Calu3 (cell line): ENCODE measurements at regions of chr11 and their contacts with region 1.

Region 1: GRCh38 chr11:31325160-31325559 is 44.4 kb downstream of the DCDC1 start:
- DNase-seq: no peak
- H3K4me3 Mint-ChIP-seq: no peak overlapping the region
- H3K27ac Mint-ChIP-seq: no peak overlapping the region
- H3K4me1 Mint-ChIP-seq: peaks cover 8% of the 10 kb centered on the region
- H3K27me3 Mint-ChIP-seq: no peaks in the 10 kb centered on the region
- CTCF ChIP-seq: no peak

Region 2: GRCh38 chr11:30775233-30775522 is 550.0 kb before region 1 on chr11:
- CTCF ChIA-PET with region 1: no interaction called
- intact Hi-C with region 1: no loop called
- DNase-seq: no peak
- H3K4me3 Mint-ChIP-seq: no peak overlapping the region
- H3K27ac Mint-ChIP-seq: no peak overlapping the region
- H3K4me1 Mint-ChIP-seq: no peaks in the 10 kb centered on the region
- H3K27me3 Mint-ChIP-seq: peaks cover 21% of the 10 kb centered on the region
- CTCF ChIP-seq: no peak

Region 3: GRCh38 chr11:31254431-31254830 is 70.7 kb before region 1 on chr11:
- CTCF ChIA-PET with region 1: interaction called, 11 read pairs
- intact Hi-C with region 1: no loop called
- DNase-seq: no peak
- H3K4me3 Mint-ChIP-seq: no peak overlapping the region
- H3K27ac Mint-ChIP-seq: no peak overlapping the region
- H3K4me1 Mint-ChIP-seq: no peaks in the 10 kb centered on the region
- H3K27me3 Mint-ChIP-seq: peaks cover 37% of the 10 kb centered on the region
- CTCF ChIP-seq: no peak

Region 4: DNA sequence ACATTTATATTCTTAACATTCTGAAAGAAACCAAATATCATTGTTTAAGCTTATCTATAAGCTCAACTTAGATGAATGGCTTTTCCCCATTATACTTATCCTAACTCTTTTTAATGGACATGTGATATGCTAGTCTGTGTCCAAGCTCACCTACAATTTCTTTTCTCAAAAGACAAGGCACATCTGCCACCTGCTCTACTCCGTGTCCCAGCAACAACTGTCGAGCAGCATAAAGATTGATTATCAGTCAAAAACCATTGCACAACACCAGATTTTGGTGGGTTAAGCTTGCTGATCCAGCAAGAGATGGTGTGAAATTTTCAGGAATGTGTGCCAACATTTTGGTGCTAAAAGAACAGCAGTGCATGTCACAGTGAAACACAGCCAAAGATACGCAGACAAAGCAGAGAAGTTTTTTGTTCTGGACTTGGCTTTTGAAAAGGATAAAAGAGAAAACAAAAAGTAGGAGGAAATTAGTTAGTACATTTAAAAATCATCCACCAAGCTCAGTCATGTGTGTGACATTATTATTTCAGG is 21.4 kb before region 1 on chr11:
- CTCF ChIA-PET with region 1: no interaction called
- intact Hi-C with region 1: loop called (anchors 2 kb)
- DNase-seq: no peak
- H3K4me3 Mint-ChIP-seq: no peak overlapping the region
- H3K27ac Mint-ChIP-seq: no peak overlapping the region
- H3K4me1 Mint-ChIP-seq: no peaks in the 10 kb centered on the region
- H3K27me3 Mint-ChIP-seq: no peaks in the 10 kb centered on the region
- CTCF ChIP-seq: no peak

Region 5: GRCh38 chr11:31422703-31423102 is 97.5 kb after region 1 on chr11:
- CTCF ChIA-PET with region 1: no interaction called
- intact Hi-C with region 1: no loop called
- DNase-seq: no peak
- H3K4me3 Mint-ChIP-seq: no peak overlapping the region
- H3K27ac Mint-ChIP-seq: no peak overlapping the region
- H3K4me1 Mint-ChIP-seq: no peaks in the 10 kb centered on the region
- H3K27me3 Mint-ChIP-seq: no peaks in the 10 kb centered on the region
- CTCF ChIP-seq: no peak